ENCODE measurements at regions of chr13 and their contacts with region 1.

Region 1: GRCh38 chr13:25420161-25420560 is 48.4 kb downstream of the ATP8A2 start:
- DNase-seq: no peak
- H3K4me3 ChIP-seq: no peak overlapping the region
- H3K27ac ChIP-seq: no peak overlapping the region
- H3K4me1 ChIP-seq: peaks cover 0 to 6% (median 2%) of the 10 kb centered on the region in 4 experiments; a peak in 3 of 7 replicates
- H3K27me3 ChIP-seq: no peaks in the 10 kb centered on the region
- CTCF ChIP-seq: no peak
- EP300 ChIP-seq: no peak
- POLR2A ChIP-seq: no peak
- RAD21 ChIP-seq: no peak

Region 2: DNA sequence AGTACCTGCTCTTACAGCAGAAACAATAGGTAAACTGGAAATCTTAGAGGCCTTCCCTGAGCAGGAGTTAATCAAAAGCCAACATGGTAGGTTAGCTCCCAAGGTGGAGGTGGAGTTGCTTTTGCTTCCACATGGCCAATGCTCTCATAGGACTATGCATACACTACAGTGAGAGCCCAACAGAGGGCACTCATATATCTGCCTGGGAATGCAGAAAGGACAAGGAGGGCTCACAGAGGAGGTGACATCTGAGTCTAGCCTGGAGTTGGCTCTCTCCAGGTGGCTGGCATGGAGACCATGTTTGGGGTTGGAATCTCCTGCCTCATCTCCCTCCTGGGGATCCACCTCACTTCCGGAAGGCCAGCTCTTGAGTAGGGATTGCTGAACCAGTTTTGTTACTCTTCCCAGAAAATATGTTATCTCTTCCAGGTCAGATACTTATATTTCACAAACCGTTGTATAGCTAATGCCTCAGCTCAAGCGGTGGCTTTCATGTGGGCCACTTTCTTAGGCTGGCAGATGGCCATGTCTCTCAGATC is 13.7 kb before region 1 on chr13:
- CTCF ChIA-PET with region 1: interaction called, 11 read pairs
- POLR2A ChIA-PET with region 1: no interaction called
- DNase-seq: no peak
- H3K4me3 ChIP-seq: no peak overlapping the region
- H3K27ac ChIP-seq: no peak overlapping the region
- H3K4me1 ChIP-seq: peaks cover 0 to 4% (median 0%) of the 10 kb centered on the region in 4 experiments; a peak in 1 of 7 replicates
- H3K27me3 ChIP-seq: no peaks in the 10 kb centered on the region
- CTCF ChIP-seq: peak in 2 of 3 experiments; percentile 49 to 54; a peak in 3 of 4 replicates
- EP300 ChIP-seq: no peak
- POLR2A ChIP-seq: no peak
- RAD21 ChIP-seq: peak; percentile 59 to 72

Region 3: DNA sequence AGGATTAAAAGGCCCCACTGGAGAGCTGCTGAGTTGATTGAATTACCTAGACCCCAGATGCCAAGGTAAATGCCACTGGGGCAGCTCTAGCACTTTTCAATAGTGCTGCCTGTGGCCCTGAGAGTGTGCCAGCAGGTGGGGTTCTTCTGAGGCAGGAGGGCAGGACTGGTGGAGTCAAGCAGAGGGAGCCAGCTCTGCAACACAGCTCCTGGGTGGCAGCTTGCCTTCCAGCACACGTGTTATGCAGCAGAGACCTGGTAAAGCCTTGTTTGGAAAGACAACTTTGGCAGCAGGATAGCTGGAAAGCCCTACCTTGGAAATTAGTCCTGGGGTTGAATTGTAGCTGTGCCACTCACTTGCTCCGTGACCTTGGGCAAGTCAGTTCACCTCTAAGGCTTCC is 258.2 kb after region 1 on chr13:
- CTCF ChIA-PET with region 1: no interaction called
- POLR2A ChIA-PET with region 1: no interaction called
- DNase-seq: no peak
- H3K4me3 ChIP-seq: no peak overlapping the region
- H3K27ac ChIP-seq: no peak overlapping the region
- H3K4me1 ChIP-seq: peaks cover 0 to 2% (median 0%) of the 10 kb centered on the region in 4 experiments; a peak in 1 of 7 replicates
- H3K27me3 ChIP-seq: no peaks in the 10 kb centered on the region
- CTCF ChIP-seq: peak; percentile 27 to 46 (median 30)
- EP300 ChIP-seq: no peak
- POLR2A ChIP-seq: no peak
- RAD21 ChIP-seq: peak; percentile 21 to 44; a peak in 2 of 4 replicates